CD4-positive, alpha-beta T cell (primary cell): ENCODE measurements at regions of chr12 and their contacts with region 1.

Region 1: DNA sequence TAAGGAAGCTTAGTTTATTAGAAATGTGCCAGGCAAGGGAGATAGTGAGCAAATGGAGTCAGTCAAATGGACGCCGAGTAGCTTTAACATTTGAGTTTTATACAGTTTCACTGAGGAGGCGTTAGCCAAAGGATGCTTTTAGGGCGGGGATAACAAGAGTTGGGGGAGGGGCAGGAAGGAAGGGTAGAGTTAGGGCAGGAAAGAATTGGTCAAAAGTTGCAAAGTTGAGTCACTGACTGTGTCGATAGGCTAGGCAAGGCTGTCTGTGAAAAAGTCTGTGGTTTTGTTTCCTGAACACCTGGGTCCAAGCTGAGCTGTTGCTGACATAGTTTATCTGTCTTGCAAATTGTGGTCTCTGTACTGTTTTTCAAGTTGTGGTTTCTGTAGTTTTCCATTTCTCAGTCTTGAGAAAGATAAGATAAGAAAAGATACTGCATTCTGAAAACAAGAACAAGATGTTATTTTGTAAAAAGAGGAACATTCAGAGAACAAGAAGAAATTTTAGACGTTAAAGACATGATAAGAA is 62.6 kb upstream of the RESF1 start:
- DNase-seq: peak; percentile 63 to 97 (median 78)
- ATAC-seq: peak; percentile 96
- H3K4me3 ChIP-seq: no peak overlapping the region
- H3K4me3 Mint-ChIP-seq: peak overlapping the region; percentile 74
- H3K27ac ChIP-seq: peak overlapping the region; percentile 71 to 82
- H3K27ac Mint-ChIP-seq: peak overlapping the region; percentile 93
- H3K4me1 ChIP-seq: peaks cover 69% of the 10 kb centered on the region
- H3K4me1 Mint-ChIP-seq: peaks cover 47% of the 10 kb centered on the region
- H3K27me3 ChIP-seq: no peaks in the 10 kb centered on the region
- H3K27me3 Mint-ChIP-seq: no peaks in the 10 kb centered on the region
- CTCF ChIP-seq: no peak

Region 2: DNA sequence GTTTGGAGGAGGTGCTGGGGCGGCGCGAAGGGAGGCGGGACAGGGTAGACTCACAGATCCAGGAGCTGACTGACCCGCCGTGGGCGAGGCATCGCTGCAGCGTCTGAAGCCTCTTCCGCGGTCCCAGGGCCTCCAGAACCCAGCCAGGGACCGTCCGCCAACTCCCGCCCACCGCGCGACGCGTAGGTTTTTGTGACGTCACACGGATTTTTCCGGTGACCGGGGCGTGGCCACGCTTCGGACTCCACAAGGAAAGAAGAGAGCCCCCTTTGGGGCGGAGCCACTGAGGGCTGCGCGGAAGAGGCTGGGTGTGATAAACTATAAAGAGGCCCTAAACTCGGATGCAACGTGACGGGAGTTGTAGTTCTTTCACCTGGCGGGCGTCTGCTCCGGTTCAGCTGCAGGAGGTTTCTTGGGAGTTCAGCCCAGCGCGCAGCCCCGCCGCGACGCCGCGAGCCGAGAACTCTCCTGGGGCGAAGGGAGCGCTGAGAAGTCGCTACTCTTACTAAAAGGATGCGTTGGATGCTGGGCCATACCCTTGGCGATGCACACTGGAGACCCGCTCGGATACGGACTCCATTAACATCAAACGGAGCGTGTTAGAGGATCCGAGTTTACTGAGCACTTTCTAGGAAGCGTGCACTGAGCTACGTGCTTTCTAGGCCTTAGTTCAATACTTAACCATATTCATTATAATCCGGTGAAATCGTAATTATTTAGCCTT is 167.5 kb before region 1 on chr12 and contains the start of gene AMN1:
- CTCF ChIA-PET with region 1: interaction called, 3 read pairs
- POLR2A ChIA-PET with region 1: interaction called, 26 read pairs
- intact Hi-C with region 1: loop called (anchors 1 to 5 kb)
- DNase-seq: peak; percentile 95 to 99 (median 98)
- ATAC-seq: peak; percentile 88
- H3K4me3 ChIP-seq: peak within 1 kb of the TSS; percentile 81
- H3K4me3 Mint-ChIP-seq: peak within 1 kb of the TSS; percentile 93
- H3K27ac ChIP-seq: peak within 1 kb of the TSS; percentile 82 to 94
- H3K27ac Mint-ChIP-seq: peak within 1 kb of the TSS; percentile 97
- H3K4me1 ChIP-seq: peaks cover 40% of the 10 kb centered on the region
- H3K4me1 Mint-ChIP-seq: peaks cover 68% of the 10 kb centered on the region
- H3K27me3 ChIP-seq: no peaks in the 10 kb centered on the region
- H3K27me3 Mint-ChIP-seq: no peaks in the 10 kb centered on the region
- CTCF ChIP-seq: peak; percentile 21
- total RNA-seq, gene AMN1: 6.9 to 8.5 TPM

Region 3: DNA sequence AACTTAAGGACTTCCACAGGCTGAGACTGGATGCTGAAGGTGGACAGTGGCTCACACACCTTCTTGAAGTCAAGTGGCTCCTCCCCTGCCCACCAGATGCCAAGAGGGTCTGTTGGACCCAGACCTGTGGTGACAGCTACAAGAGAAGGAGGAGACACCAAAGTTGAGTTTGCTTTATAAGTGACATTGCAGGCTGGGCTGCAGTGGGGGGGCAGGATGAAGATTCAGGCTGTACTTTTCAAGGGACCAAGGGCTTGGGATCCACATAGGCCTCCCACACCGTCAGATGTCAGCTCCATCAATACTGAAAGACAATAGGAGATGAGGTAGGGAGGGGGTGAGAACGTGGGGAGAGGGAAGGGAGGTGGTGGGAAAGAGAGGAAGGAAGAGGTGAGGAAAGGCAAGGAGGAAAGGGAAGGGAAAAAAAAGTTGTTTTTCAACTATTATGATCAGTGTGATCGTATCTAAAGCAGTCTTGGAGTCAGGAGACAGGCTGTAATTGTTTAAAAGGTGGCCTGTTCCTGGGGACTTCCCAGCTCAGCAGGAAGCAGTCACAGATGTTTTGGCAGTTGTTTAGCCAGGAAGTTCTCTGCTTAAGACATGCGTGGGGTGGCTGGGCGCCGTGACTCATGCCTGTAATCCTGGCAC is 21.5 kb before region 1 on chr12:
- CTCF ChIA-PET with region 1: no interaction called
- POLR2A ChIA-PET with region 1: interaction called, 29 read pairs
- intact Hi-C with region 1: loop called in 1 of 2 experiments (anchors 1 kb)
- DNase-seq: peak; percentile 51 to 94 (median 68)
- ATAC-seq: peak; percentile 95
- H3K4me3 ChIP-seq: no peak overlapping the region
- H3K4me3 Mint-ChIP-seq: peak overlapping the region; percentile 82
- H3K27ac ChIP-seq: peak overlapping the region; percentile 78 to 92
- H3K27ac Mint-ChIP-seq: peak overlapping the region; percentile 99
- H3K4me1 ChIP-seq: peaks cover 25% of the 10 kb centered on the region
- H3K4me1 Mint-ChIP-seq: peaks cover 60% of the 10 kb centered on the region
- H3K27me3 ChIP-seq: no peaks in the 10 kb centered on the region
- H3K27me3 Mint-ChIP-seq: no peaks in the 10 kb centered on the region
- CTCF ChIP-seq: no peak

Region 4: GRCh38 chr12:31928246-31929026 is 31.9 kb after region 1 on chr12:
- CTCF ChIA-PET with region 1: no interaction called
- POLR2A ChIA-PET with region 1: interaction called, 23 read pairs
- intact Hi-C with region 1: loop called in 1 of 2 experiments (anchors 5 kb)
- DNase-seq: peak in 12 of 14 experiments; percentile 6 to 67 (median 22)
- ATAC-seq: peak; percentile 79
- H3K4me3 ChIP-seq: peak overlapping the region; percentile 39
- H3K4me3 Mint-ChIP-seq: peak overlapping the region; percentile 85
- H3K27ac ChIP-seq: peak overlapping the region; percentile 51 to 62
- H3K27ac Mint-ChIP-seq: peak overlapping the region; percentile 95
- H3K4me1 ChIP-seq: peaks cover 45% of the 10 kb centered on the region
- H3K4me1 Mint-ChIP-seq: peaks cover 51% of the 10 kb centered on the region
- H3K27me3 ChIP-seq: no peaks in the 10 kb centered on the region
- H3K27me3 Mint-ChIP-seq: no peaks in the 10 kb centered on the region
- CTCF ChIP-seq: no peak